ENCODE measurements at regions of chr1 and their contacts with region 1.

Region 1: DNA sequence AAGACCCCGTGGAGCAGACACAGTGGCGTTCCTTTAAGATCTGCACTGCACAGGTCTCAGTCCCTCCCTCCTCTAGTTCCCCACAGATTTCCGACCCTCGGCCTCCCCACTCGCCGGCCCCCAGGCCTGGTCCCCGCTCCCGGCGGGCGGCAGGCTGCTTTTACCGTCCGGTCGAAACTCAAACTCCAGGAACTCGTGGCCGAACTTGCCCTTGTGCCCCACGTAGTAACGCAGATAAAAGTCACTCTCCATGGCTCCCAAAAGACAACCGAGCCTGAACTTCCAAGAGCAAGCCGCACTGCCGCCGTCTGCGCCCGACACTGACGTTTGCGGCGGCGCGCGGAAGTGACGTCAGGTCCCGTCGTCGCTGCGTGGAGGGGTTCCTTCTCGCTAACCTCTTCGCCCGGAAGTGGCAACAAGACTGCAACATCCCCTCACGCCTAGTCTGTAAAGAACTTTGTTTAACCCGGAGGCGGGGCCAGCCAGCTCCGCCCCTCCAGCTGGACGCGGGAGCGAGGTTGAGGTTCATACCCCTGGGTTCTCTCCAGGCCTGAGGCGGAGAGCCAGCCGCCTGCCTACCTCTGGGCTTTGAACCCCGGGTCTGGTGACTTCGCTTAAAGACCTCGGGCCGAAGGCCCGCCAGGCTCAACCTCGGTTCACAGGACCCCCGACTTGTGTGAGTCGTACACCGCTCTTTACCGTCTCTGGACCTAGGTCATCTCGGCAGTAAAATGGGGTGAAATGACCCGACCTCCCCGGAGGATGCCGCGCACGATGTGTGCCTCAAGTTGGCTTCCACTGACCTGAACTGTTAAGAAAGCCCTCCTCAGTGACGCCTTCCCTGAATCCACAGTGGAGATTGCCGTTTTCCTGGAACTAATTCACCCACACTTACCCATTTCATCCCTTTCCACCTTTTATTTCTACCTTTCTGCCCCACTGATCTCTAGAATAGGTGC is at the start of gene MAGOH:
- DNase-seq: peak; percentile 90 to 96 (median 95)
- ATAC-seq: peak; percentile 98
- H3K4me3 ChIP-seq: peak within 1 kb of the TSS; percentile 97
- H3K4me3 Mint-ChIP-seq: peak within 1 kb of the TSS; percentile 96 to 99 (median 98)
- H3K27ac ChIP-seq: peak within 1 kb of the TSS; percentile 94
- H3K27ac Mint-ChIP-seq: peak within 1 kb of the TSS; percentile 92 to 99 (median 98)
- H3K4me1 ChIP-seq: peaks cover 18 to 19% of the 10 kb centered on the region in 2 donors
- H3K4me1 Mint-ChIP-seq: peaks cover 18 to 47% (median 32%) of the 10 kb centered on the region in 7 donors
- H3K27me3 ChIP-seq: no peaks in the 10 kb centered on the region
- H3K27me3 Mint-ChIP-seq: peaks cover 0 to 2% (median 0%) of the 10 kb centered on the region in 5 donors
- total RNA-seq, gene MAGOH: 37.7 to 76.7 (median 52.3) TPM

Region 2: DNA sequence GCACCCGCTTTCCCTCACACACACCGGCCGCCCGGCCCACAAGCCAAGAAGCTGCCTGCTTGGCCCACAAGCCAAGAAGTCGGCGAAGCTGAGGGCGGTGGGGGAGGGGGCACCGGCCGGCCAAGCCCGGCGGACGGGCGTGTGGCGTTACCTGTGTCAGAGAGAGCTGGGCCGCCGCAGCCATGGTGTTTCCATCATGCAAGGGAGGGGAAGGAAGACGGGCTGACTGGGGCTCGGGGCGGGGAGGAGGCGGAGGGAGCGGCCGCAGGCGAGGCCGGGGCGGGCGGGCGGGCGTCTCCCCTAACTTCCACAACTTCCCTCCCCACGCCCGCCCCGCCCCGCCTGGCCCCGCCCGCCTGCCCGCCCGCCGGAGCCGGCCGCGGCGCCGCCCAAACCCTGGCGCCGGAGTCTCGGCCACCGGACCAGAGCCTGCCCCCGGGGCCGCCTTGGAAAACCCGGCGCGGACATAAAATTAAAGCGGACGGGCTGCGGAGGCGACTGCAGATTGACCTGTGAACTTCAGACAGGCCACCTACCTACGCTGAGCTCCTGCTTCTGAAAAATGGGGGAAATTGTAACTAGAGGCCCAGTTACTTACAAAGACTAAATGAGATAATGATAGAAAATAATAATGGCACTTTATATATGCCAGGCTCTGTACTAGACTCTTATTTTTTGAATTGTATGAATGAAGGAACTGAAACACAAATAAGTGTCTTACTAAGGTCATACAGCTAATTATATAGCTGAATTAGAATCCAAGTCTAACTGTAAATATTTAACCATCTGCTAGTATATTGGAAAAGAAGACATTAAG is 1719.2 kb before region 1 on chr1 and contains the start of gene EPS15:
- CTCF ChIA-PET with region 1: no interaction called
- POLR2A ChIA-PET with region 1: no interaction called
- intact Hi-C with region 1: loop called in 1 of 2 experiments (anchors 5 kb)
- DNase-seq: peak; percentile 62 to 90 (median 77)
- ATAC-seq: peak; percentile 86
- H3K4me3 ChIP-seq: peak within 1 kb of the TSS; percentile 87
- H3K4me3 Mint-ChIP-seq: peak within 1 kb of the TSS; percentile 89 to 97 (median 94)
- H3K27ac ChIP-seq: peak within 1 kb of the TSS; percentile 66
- H3K27ac Mint-ChIP-seq: peak within 1 kb of the TSS; percentile 86 to 95 (median 90)
- H3K4me1 ChIP-seq: peaks cover 31 to 34% of the 10 kb centered on the region in 2 donors
- H3K4me1 Mint-ChIP-seq: peaks cover 46 to 58% (median 55%) of the 10 kb centered on the region in 7 donors
- H3K27me3 ChIP-seq: no peaks in the 10 kb centered on the region
- H3K27me3 Mint-ChIP-seq: no peaks in the 10 kb centered on the region
- total RNA-seq, gene EPS15: 44.8 to 79.9 (median 53.5) TPM

Region 3: DNA sequence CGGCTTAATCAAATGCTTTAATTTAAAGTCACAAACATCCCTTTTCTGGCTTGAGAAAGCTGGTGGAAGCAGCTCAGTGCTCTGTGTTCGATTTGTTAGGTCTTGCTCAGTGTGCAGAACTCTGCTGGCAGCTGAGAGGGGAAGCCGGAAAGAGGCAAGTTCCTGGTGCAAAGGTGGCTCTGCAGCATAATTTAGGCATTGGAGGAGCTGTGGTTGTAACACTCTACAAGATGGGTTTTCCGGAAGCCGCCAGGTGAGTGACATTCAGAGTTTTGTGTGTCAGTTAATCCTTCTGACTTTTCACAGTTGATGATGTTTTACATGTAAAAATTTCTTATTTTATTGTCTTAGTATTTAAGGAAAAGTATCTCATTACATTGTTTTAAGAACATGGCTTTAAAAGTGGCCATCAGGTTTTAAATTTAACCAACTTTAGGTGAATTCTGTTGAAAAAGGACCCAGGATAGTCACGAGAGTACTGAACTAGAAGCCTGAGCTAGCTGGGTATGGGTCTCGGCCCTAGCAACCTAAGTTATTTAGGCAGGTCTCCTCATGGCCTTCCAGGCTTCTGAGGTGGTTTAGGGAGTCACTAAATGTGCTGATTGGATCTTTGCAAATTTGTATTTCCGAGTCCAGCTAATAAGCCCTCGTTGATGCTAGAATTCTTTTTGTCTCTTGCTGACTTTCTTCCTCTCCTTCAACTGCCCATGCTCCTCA is 223.5 kb before region 1 on chr1:
- CTCF ChIA-PET with region 1: no interaction called
- POLR2A ChIA-PET with region 1: no interaction called
- intact Hi-C with region 1: loop called in 1 of 2 experiments (anchors 2 kb)
- DNase-seq: peak; percentile 27 to 91 (median 84)
- ATAC-seq: peak; percentile 100
- H3K4me3 ChIP-seq: peak overlapping the region; percentile 65
- H3K4me3 Mint-ChIP-seq: peak overlapping the region; percentile 81 to 96 (median 90)
- H3K27ac ChIP-seq: peak overlapping the region; percentile 57
- H3K27ac Mint-ChIP-seq: peak overlapping the region; percentile 57 to 92 (median 84)
- H3K4me1 ChIP-seq: peaks cover 14 to 16% of the 10 kb centered on the region in 2 donors
- H3K4me1 Mint-ChIP-seq: peaks cover 20 to 48% (median 40%) of the 10 kb centered on the region in 7 donors
- H3K27me3 ChIP-seq: no peaks in the 10 kb centered on the region
- H3K27me3 Mint-ChIP-seq: no peaks in the 10 kb centered on the region

Region 4: DNA sequence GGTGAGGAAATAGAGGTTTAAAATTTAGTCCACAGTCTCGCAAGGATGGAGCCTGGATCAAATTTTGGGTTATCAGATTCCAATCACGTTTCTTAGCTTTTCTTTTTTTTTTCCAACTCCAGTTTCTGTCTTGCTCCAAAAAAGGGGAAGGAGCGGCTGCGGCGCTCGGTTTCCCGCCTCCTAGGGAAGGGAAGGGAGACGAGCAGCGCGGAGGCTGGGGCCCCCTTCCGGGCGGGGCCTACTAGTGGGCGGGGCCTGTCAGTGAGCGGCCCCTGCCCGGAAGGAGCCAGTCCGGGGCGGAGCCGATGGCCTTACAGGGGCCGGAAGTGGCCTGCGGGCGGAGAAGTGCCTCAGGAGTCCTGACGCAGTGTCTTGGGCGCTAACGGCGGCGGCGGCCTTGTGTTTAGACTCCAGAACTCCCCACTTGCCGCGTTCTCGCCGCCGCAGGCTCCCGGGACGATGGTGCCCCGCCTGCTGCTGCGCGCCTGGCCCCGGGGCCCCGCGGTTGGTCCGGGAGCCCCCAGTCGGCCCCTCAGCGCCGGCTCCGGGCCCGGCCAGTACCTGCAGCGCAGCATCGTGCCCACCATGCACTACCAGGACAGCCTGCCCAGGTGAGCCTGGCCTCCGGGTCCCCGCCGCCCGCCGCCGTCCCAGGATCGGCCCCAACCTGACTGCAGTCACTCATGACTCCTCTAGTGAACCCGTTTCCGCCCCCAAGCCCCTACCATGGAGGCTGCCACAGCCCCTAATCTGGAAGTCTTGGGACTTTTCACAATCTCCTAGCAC is 41.8 kb before region 1 on chr1 and contains the start of gene CPT2:
- CTCF ChIA-PET with region 1: no interaction called
- POLR2A ChIA-PET with region 1: no interaction called
- intact Hi-C with region 1: loop called (anchors 1 kb)
- DNase-seq: peak; percentile 78 to 94 (median 89)
- ATAC-seq: peak; percentile 99
- H3K4me3 ChIP-seq: peak within 1 kb of the TSS; percentile 91
- H3K4me3 Mint-ChIP-seq: peak within 1 kb of the TSS; percentile 88 to 100 (median 98)
- H3K27ac ChIP-seq: peak within 1 kb of the TSS; percentile 98
- H3K27ac Mint-ChIP-seq: peak within 1 kb of the TSS; percentile 90 to 100 (median 97)
- H3K4me1 ChIP-seq: peaks cover 16 to 20% of the 10 kb centered on the region in 2 donors
- H3K4me1 Mint-ChIP-seq: peaks cover 13 to 48% (median 44%) of the 10 kb centered on the region in 7 donors
- H3K27me3 ChIP-seq: no peaks in the 10 kb centered on the region
- H3K27me3 Mint-ChIP-seq: no peaks in the 10 kb centered on the region
- total RNA-seq, gene CPT2: 8.8 to 23.0 (median 13.4) TPM

Region 5: GRCh38 chr1:53220171-53220961 is 18.1 kb before region 1 on chr1 and contains the start of gene CZIB:
- CTCF ChIA-PET with region 1: interaction called, 3 read pairs
- POLR2A ChIA-PET with region 1: interaction called, 39 read pairs
- intact Hi-C with region 1: loop called (anchors 1 kb)
- DNase-seq: peak; percentile 85 to 97 (median 92)
- ATAC-seq: peak; percentile 97
- H3K4me3 ChIP-seq: peak within 1 kb of the TSS; percentile 80
- H3K4me3 Mint-ChIP-seq: peak within 1 kb of the TSS; percentile 83 to 94 (median 92)
- H3K27ac ChIP-seq: peak within 1 kb of the TSS; percentile 99
- H3K27ac Mint-ChIP-seq: peak within 1 kb of the TSS; percentile 91 to 98 (median 96)
- H3K4me1 ChIP-seq: peaks cover 15% of the 10 kb centered on the region in 2 donors
- H3K4me1 Mint-ChIP-seq: peaks cover 15 to 31% (median 26%) of the 10 kb centered on the region in 7 donors
- H3K27me3 ChIP-seq: no peaks in the 10 kb centered on the region
- H3K27me3 Mint-ChIP-seq: no peaks in the 10 kb centered on the region
- total RNA-seq, gene CZIB: 41.9 to 94.9 (median 51.4) TPM

Region 6: GRCh38 chr1:53393325-53393792 is 154.9 kb after region 1 on chr1:
- CTCF ChIA-PET with region 1: no interaction called
- POLR2A ChIA-PET with region 1: no interaction called
- intact Hi-C with region 1: loop called in 1 of 2 experiments (anchors 1 kb)
- DNase-seq: peak; percentile 28 to 80 (median 62)
- ATAC-seq: peak; percentile 81
- H3K4me3 ChIP-seq: no peak overlapping the region
- H3K4me3 Mint-ChIP-seq: no peak overlapping the region
- H3K27ac ChIP-seq: no peak overlapping the region
- H3K27ac Mint-ChIP-seq: peak overlapping the region in 1 of 9 donors; percentile 45
- H3K4me1 ChIP-seq: no peaks in the 10 kb centered on the region
- H3K4me1 Mint-ChIP-seq: peaks cover 0 to 10% (median 0%) of the 10 kb centered on the region in 7 donors
- H3K27me3 ChIP-seq: no peaks in the 10 kb centered on the region
- H3K27me3 Mint-ChIP-seq: peaks cover 0 to 10% (median 0%) of the 10 kb centered on the region in 5 donors

Region 7: DNA sequence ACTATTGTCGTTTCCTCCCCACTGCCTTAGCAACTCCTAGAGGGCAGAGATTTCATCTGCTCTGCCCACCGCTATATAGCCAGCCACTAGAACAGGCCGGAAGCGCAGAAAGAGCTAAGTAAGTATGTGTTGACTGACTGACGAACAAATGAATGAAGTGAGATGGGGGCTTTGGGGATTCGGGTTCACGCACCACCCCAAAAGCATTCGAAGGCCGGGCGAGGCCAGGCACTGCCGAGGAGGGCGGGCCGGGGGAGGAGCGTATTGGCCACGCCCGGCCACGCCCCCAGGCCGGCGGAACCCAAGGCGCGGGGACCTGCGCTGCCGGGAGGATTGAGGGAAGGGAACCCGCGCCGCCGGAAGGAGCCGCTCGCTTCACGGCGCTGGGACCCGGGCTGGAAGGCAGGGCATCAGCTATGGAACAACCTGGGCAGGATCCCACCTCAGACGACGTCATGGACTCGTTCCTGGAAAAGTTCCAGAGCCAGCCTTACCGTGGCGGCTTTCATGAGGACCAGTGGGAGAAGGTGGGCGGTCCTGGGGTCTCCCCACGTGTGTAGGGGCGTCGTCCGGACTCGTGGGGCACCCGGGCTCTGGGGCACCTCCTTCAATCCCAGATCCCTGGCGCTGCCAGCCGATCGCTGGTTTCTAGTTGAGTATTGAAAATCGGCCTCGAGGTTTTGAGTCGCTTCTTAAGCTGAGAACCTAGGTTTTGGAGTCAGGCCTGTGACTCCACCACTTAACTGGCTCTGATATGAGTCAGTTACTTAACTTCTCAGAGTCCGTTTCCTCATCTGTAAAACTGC is 1477.2 kb after region 1 on chr1 and contains the start of gene TTC4:
- CTCF ChIA-PET with region 1: no interaction called
- POLR2A ChIA-PET with region 1: no interaction called
- intact Hi-C with region 1: loop called in 1 of 2 experiments (anchors 2 kb)
- DNase-seq: peak; percentile 71 to 92 (median 85)
- ATAC-seq: peak; percentile 99
- H3K4me3 ChIP-seq: peak within 1 kb of the TSS; percentile 86
- H3K4me3 Mint-ChIP-seq: peak within 1 kb of the TSS; percentile 81 to 96 (median 88)
- H3K27ac ChIP-seq: peak within 1 kb of the TSS; percentile 84
- H3K27ac Mint-ChIP-seq: peak within 1 kb of the TSS; percentile 58 to 94 (median 91)
- H3K4me1 ChIP-seq: peaks cover 14 to 15% of the 10 kb centered on the region in 2 donors
- H3K4me1 Mint-ChIP-seq: peaks cover 15 to 42% (median 34%) of the 10 kb centered on the region in 7 donors
- H3K27me3 ChIP-seq: no peaks in the 10 kb centered on the region
- H3K27me3 Mint-ChIP-seq: no peaks in the 10 kb centered on the region
- total RNA-seq, gene TTC4: 11.6 to 25.8 (median 21.4) TPM